ENCODE measurements at regions of chr16 and their contacts with region 1.

Region 1: DNA sequence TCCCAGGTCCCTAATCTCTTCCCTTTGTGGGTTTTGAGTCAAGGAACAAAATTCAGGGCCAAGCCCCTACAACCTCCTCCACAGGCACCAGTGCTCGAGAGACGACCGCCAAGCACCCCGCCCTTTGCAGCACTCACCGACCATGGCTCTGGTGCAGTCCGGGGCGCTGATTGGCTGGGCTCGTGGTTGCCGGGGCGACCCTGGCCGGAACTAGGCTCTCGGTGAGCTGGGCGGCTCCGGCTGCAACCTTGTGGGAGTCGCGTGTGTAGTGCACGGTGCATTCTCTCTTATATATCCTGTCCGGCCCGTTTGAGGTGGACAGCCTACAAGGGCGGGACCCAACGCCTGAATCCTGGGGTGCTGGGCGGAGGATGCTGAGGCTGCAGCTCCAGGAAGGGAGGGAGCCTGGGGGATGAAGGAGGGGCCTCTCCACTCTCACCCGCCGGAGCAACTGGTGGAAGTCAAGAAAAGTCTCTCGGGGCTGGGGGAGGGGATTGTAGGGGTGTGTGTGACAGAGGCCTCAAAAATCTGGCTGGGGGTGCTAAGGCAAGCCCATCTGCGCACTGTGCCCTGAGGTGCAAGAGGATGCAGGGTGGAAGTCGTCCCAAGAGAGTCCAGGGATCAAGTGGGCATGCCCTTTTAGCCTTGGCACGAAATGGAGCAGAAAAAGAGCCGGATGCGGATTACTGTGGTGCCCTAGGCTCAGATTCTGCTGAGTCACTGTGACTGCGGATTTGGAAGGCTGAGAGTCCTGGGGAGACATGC is at the start of gene NQO1:
- DNase-seq: peak; percentile 92
- H3K4me3 ChIP-seq: peak within 1 kb of the TSS; percentile 37 to 86 (median 70)
- H3K27ac ChIP-seq: peak within 1 kb of the TSS; percentile 72
- H3K4me1 ChIP-seq: peaks cover 36% of the 10 kb centered on the region
- H3K27me3 ChIP-seq: no peaks in the 10 kb centered on the region
- CTCF ChIP-seq: no peak
- POLR2A ChIP-seq: peak; percentile 91
- total RNA-seq, gene NQO1: 301 and 345 TPM in 2 replicates

Region 2: GRCh38 chr16:69378760-69379159 is 347.7 kb before region 1 on chr16:
- CTCF ChIA-PET with region 1: no interaction called
- POLR2A ChIA-PET with region 1: interaction called, 12 read pairs
- dilution Hi-C with region 1: no loop called
- intact Hi-C with region 1: no loop called
- DNase-seq: peak; percentile 79
- H3K4me3 ChIP-seq: no peak overlapping the region
- H3K27ac ChIP-seq: peak overlapping the region; percentile 78
- H3K4me1 ChIP-seq: peaks cover 25% of the 10 kb centered on the region
- H3K27me3 ChIP-seq: no peaks in the 10 kb centered on the region
- CTCF ChIP-seq: no peak
- POLR2A ChIP-seq: no peak

Region 3: DNA sequence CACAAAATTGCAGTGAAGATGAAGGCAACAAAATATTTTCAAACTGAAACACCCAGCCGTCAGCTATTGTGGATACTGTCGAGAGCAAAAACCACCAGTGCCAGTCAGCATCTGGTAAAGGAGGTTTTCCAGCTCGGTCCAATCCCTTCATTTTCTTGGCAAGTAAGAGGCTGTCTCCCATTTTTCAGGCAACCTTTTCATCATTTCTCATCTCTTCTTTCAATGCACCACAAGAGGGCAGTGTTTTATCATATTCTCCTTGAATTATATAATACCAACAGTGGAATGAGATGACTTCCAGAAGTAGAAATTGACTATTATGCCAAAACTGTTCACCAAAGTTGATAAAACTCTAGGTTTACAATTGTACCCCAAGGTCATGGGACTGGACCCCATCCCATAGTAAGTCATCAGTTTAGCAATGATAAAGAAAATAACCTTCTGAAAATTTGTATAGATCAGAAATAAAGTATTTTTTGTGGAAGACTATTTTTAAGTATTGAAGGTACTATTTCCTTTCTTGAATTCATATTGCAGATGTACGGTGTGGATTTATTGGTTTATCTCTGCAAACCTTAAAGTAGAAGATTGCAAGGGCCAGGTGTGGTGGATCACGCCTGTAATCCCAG is 16.9 kb before region 1 on chr16:
- CTCF ChIA-PET with region 1: interaction called, 11 read pairs
- POLR2A ChIA-PET with region 1: no interaction called
- dilution Hi-C with region 1: no loop called
- intact Hi-C with region 1: no loop called
- DNase-seq: peak; percentile 71
- H3K4me3 ChIP-seq: no peak overlapping the region
- H3K27ac ChIP-seq: no peak overlapping the region
- H3K4me1 ChIP-seq: no peaks in the 10 kb centered on the region
- H3K27me3 ChIP-seq: no peaks in the 10 kb centered on the region
- CTCF ChIP-seq: peak; percentile 37 to 55
- POLR2A ChIP-seq: no peak

Region 4: DNA sequence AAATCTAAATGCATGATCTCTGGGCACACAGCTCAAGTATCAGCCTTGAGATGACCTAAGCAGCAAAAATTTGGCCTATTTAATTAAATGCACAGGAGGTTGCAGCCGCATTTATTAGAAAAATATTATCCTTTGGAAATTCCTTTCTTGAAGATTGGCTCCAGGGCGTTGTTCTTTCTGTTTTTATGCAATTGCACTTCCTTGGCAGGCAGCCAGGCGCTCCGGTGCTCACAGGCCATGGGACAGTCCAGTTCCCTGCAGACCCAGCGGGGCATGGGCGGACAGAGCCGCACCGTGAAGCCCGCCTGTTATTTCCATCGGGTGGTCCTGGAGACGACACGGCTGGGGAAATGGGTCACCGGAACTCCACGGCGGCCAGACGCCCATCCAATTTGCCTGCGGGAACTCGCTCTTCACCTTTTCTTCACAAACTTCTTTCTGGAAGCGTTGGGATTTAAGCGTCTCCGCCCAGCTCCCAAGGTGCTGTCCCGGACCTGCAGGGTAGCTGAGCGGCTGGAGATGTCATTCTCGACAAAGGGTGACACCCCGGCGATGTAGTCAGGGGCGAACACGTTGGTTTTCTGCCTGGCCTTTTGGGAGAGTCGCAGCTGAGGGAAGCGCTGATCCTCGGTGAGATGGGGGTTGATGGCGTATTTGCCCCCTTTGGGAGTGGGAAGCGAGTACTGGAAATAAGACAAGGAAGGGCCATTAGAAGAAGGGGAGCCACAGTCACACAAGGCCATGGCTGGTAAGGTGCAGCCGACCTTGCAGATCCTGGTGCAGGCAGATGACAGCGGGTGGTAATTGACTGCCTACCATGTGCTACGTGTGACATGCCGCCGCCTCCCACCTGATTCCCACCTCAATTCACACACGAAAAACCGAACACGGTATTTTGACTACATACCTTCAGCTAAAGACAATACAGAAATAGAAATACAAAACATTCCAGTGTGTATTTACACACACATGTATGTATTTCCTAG is 15.7 kb after region 1 on chr16:
- CTCF ChIA-PET with region 1: interaction called, 3 read pairs
- POLR2A ChIA-PET with region 1: interaction called, 4 read pairs
- dilution Hi-C with region 1: no loop called
- intact Hi-C with region 1: loop called (anchors 1 kb)
- DNase-seq: peak; percentile 73
- H3K4me3 ChIP-seq: no peak overlapping the region
- H3K27ac ChIP-seq: no peak overlapping the region
- H3K4me1 ChIP-seq: peaks cover 18% of the 10 kb centered on the region
- H3K27me3 ChIP-seq: no peaks in the 10 kb centered on the region
- CTCF ChIP-seq: no peak
- POLR2A ChIP-seq: no peak

Region 5: GRCh38 chr16:69906838-69907401 is 180.4 kb after region 1 on chr16:
- CTCF ChIA-PET with region 1: no interaction called
- POLR2A ChIA-PET with region 1: no interaction called
- dilution Hi-C with region 1: no loop called
- intact Hi-C with region 1: no loop called
- DNase-seq: no peak
- H3K4me3 ChIP-seq: no peak overlapping the region
- H3K27ac ChIP-seq: no peak overlapping the region
- H3K4me1 ChIP-seq: no peaks in the 10 kb centered on the region
- H3K27me3 ChIP-seq: no peaks in the 10 kb centered on the region
- CTCF ChIP-seq: no peak
- POLR2A ChIP-seq: no peak

Measured in endothelial cell of umbilical vein (primary cell).